ENCODE measurements at regions of chr2 and their contacts with region 1.

Region 1: DNA sequence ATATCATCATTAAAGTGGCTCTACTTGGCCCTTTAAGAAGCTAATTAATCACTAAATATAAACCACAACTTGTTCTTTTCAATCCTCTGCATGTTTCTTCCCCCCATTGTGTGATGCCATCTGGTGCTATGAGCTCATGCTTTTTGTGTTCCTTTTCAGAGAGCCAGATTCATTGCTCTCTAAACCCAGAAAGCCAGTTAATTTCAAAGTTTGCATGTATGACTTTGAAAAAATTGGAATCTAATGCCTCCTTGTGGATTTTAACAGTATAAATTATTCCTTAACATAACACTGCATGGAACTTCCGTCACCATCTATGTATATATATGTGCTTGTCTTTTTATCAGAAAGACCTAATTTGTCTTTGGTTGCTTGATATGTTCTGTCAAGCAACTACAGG is 31.1 kb downstream of the TMEM178A start:
- DNase-seq: peak; percentile 87
- ATAC-seq: peak; percentile 68
- H3K4me3 ChIP-seq: no peak overlapping the region
- H3K27ac ChIP-seq: no peak overlapping the region
- H3K4me1 ChIP-seq: peaks cover 10% of the 10 kb centered on the region
- H3K27me3 ChIP-seq: no peaks in the 10 kb centered on the region
- CTCF ChIP-seq: peak; percentile 60
- POLR2A ChIP-seq: no peak
- RAD21 ChIP-seq: peak; percentile 69

Region 2: GRCh38 chr2:39289609-39290008 is 407.2 kb before region 1 on chr2:
- CTCF ChIA-PET with region 1: no interaction called
- POLR2A ChIA-PET with region 1: no interaction called
- dilution Hi-C with region 1: no loop called
- in situ Hi-C with region 1: no loop called
- intact Hi-C with region 1: loop called (anchors 10 kb)
- DNase-seq: peak; percentile 26
- ATAC-seq: no peak
- H3K4me3 ChIP-seq: no peak overlapping the region
- H3K27ac ChIP-seq: no peak overlapping the region
- H3K4me1 ChIP-seq: 0 out of 2 replicates have a peak, but pooled peaks cover 2% of the 10 kb centered on the region
- H3K27me3 ChIP-seq: no peaks in the 10 kb centered on the region
- CTCF ChIP-seq: no peak
- POLR2A ChIP-seq: no peak
- RAD21 ChIP-seq: no peak

Region 3: DNA sequence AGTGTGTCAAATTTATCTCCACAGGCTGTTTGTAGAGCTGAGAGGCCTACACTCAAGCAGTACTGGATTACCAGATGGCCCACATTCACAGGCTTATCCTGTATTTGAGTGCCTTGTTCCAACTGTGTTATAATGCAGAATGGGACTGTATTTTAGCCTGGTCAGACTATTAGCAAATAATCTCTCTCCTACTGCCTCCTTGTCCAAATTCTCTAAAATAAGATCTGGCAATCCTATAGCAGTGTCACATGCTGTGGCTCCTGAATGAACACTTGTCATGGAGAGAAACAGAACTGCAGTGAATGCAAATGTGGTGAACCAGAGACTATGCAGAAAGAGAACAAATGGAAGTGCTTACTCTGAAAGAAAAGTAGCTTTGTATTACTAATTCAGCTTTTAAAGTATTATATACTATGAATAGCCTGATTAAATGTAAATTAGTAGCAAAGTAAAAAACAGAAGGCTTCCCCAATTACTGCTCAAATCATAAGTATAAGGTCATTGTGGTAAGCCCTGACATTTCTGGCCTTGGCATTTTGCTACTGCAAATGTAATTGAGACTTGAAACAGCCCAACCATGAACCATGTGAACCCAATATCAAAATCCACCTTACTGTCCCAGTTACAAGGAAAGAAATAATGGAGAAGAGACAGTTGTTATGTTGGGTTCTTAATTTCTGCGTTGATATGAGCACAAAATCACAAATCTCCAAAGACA is 339.8 kb before region 1 on chr2:
- CTCF ChIA-PET with region 1: no interaction called
- POLR2A ChIA-PET with region 1: no interaction called
- dilution Hi-C with region 1: no loop called
- in situ Hi-C with region 1: loop called (anchors 25 kb)
- intact Hi-C with region 1: no loop called
- DNase-seq: no peak
- ATAC-seq: no peak
- H3K4me3 ChIP-seq: no peak overlapping the region
- H3K27ac ChIP-seq: no peak overlapping the region
- H3K4me1 ChIP-seq: no peaks in the 10 kb centered on the region
- H3K27me3 ChIP-seq: no peaks in the 10 kb centered on the region
- CTCF ChIP-seq: no peak
- POLR2A ChIP-seq: no peak
- RAD21 ChIP-seq: no peak

Region 4: DNA sequence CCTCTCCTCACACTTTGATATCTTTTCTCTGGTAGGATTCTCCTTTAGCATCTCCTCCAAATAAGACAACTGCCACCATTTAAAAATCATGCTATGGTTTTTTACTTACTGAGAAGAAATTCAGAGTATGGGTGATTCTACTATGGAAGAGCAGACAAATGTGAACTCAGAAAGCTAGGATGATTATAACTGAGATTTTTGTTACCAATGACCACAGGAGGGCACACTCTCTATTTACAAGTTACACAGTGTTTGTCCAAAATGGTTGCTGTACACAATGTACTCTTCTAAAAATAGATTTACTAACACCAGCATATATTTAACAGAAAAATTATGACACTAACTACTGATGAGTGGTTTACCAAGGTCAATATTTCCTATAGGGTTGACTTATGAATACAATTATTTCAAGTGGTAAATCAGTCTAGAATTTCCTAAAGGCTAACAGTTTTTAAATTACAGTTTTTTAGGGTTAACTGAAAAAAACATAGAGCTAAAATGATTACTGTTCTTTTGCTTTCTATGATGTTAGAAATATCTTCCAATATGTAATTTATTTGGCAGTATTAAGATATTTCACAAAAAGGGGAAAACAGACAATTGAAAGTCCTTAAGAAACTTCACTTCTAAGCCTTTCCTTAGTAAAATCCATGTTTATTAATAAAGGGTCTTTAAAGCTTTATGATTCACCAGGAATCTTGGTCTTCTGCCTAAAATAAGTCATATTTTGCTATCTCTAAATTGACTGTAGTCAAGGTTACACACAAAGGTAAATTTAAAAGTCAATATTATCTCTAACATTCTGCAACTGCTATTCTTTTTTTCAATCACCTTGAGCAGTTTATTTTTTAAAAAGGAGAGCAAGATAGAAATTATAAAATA is 317.0 kb before region 1 on chr2:
- CTCF ChIA-PET with region 1: no interaction called
- POLR2A ChIA-PET with region 1: no interaction called
- dilution Hi-C with region 1: no loop called
- in situ Hi-C with region 1: no loop called
- intact Hi-C with region 1: loop called (anchors 1 kb)
- DNase-seq: peak; percentile 68
- ATAC-seq: peak; percentile 76
- H3K4me3 ChIP-seq: no peak overlapping the region
- H3K27ac ChIP-seq: no peak overlapping the region
- H3K4me1 ChIP-seq: peaks cover 10% of the 10 kb centered on the region
- H3K27me3 ChIP-seq: no peaks in the 10 kb centered on the region
- CTCF ChIP-seq: peak; percentile 63
- POLR2A ChIP-seq: no peak
- RAD21 ChIP-seq: peak; percentile 67

Region 5: GRCh38 chr2:39513641-39514094 is 183.2 kb before region 1 on chr2:
- CTCF ChIA-PET with region 1: interaction called, 3 read pairs
- POLR2A ChIA-PET with region 1: no interaction called
- dilution Hi-C with region 1: no loop called
- in situ Hi-C with region 1: loop called (anchors 5 kb)
- intact Hi-C with region 1: loop called (anchors 1 kb)
- DNase-seq: peak; percentile 97
- ATAC-seq: peak; percentile 91
- H3K4me3 ChIP-seq: no peak overlapping the region
- H3K27ac ChIP-seq: peak overlapping the region; percentile 42
- H3K4me1 ChIP-seq: peaks cover 31% of the 10 kb centered on the region
- H3K27me3 ChIP-seq: no peaks in the 10 kb centered on the region
- CTCF ChIP-seq: peak; percentile 86
- POLR2A ChIP-seq: 0 out of 2 replicates have a peak, but pooled peaks have one; percentile 35
- RAD21 ChIP-seq: peak; percentile 87

Region 6: DNA sequence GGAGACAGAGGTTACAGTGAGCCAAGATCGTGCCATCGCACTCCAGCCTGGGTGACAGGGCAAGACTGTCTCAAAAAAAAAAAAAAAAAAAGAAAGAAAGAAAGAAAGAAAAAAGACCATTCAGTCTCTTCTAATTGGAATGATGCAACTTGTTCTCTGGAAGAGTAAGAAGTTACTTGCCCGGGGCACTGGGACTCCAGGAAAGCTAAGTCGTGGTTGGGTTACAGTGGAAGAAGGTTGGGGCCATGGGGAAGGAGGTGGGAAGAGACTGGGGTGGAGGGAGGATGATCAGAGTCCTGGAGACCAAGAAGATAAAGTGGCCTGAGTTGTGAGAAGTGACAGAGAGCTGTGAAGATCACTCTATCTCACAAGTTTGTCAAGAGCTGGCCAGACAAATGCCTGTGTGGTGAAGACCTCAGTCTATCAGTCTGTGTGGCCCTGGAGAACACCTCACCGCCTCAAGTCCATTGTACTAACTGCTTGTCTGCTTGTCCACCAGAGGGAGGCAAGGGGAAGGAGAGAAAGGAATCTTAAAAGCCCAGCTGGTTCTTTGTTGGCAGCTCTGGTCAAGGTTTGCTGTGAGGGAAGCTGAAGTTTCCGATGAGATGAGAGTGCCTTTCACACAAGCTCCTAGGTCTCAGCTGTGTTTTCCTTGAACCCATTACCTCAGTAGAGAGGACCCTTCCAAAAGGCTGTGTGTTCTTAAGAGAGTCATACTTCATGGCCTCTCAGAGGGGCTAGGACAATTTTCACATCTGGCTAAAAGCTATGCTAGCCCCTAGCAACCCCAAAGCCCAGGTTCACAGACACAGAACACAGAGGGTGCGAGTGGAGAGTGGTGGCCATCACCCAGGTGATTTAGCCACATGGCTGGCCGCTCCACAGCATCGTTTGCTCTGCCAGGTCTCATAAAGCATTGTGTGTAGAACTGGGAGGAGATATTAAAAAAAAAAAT is 103.1 kb before region 1 on chr2:
- CTCF ChIA-PET with region 1: interaction called, 20 read pairs
- POLR2A ChIA-PET with region 1: no interaction called
- dilution Hi-C with region 1: no loop called
- in situ Hi-C with region 1: no loop called
- intact Hi-C with region 1: loop called (anchors 1 kb)
- DNase-seq: peak; percentile 88
- ATAC-seq: peak; percentile 98
- H3K4me3 ChIP-seq: no peak overlapping the region
- H3K27ac ChIP-seq: no peak overlapping the region
- H3K4me1 ChIP-seq: peaks cover 5% of the 10 kb centered on the region; the same call in 1 of the 2 replicates
- H3K27me3 ChIP-seq: no peaks in the 10 kb centered on the region
- CTCF ChIP-seq: peak; percentile 79
- POLR2A ChIP-seq: no peak
- RAD21 ChIP-seq: peak; percentile 80

Region 7: DNA sequence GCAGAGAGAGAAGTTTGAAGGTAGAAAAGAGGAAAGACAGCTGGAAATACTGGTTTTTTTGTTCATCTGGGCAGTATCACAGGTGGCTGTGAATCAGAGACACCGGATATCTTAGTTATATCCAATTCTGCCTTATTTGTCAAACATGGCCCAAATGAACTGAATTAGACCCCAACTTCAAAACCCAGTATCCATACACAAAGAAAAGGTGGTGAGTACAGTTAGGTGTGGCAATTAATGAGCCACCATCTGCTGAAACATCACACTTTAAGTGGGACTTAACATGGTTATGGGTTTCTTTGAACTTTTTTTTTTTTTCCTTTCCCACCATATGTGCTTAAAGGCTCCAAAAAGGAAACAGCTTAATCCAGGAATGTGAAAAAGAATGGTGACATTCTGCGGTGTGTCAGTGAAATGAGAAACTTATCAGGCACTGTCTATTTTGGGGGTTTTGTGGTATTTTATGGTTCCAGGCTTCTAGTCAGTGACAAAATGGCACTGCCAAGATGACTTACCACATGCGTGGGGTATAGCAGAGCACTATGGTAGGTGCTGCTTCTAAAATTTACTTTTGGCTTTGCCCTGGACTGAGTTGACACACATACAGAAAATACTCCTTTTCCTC is 36.1 kb before region 1 on chr2:
- CTCF ChIA-PET with region 1: no interaction called
- POLR2A ChIA-PET with region 1: no interaction called
- dilution Hi-C with region 1: no loop called
- in situ Hi-C with region 1: no loop called
- intact Hi-C with region 1: loop called (anchors 1 kb)
- DNase-seq: no peak
- ATAC-seq: no peak
- H3K4me3 ChIP-seq: no peak overlapping the region
- H3K27ac ChIP-seq: no peak overlapping the region
- H3K4me1 ChIP-seq: peaks cover 9% of the 10 kb centered on the region
- H3K27me3 ChIP-seq: peaks cover 8% of the 10 kb centered on the region
- CTCF ChIP-seq: no peak
- POLR2A ChIP-seq: no peak
- RAD21 ChIP-seq: no peak

Region 8: DNA sequence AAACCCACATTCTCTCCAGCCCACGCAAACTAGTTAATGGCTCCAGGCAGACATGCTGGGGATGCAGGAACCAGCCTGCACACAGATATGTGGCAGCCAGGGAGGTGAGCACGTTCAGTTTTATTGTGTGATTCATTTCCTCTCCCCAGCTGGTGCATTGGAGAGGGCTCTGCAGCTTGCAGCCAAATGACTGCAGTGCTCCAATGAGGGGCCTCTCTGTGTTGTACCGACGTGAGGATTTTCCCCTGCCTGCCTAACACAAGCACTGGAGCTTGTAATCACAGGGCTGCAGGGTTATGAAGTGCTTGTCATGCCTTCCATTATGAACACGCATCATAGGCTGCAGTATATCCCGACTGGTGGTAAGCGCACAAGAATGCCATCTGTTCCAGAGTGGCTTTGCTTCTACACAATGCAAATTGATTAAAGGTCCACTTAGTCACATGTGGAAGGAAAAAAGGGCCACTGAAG is 174.5 kb after region 1 on chr2:
- CTCF ChIA-PET with region 1: no interaction called
- POLR2A ChIA-PET with region 1: no interaction called
- dilution Hi-C with region 1: no loop called
- in situ Hi-C with region 1: no loop called
- intact Hi-C with region 1: no loop called
- DNase-seq: peak; percentile 90
- ATAC-seq: peak; percentile 71
- H3K4me3 ChIP-seq: no peak overlapping the region
- H3K27ac ChIP-seq: no peak overlapping the region
- H3K4me1 ChIP-seq: peaks cover 9% of the 10 kb centered on the region
- H3K27me3 ChIP-seq: peaks cover 2% of the 10 kb centered on the region; the same call in 1 of the 2 replicates
- CTCF ChIP-seq: no peak
- POLR2A ChIP-seq: no peak
- RAD21 ChIP-seq: no peak